Posterior vena cava (tissue), 2 donors: ENCODE measurements at regions of chr6 and their contacts with region 1.

Region 1: GRCh38 chr6:162179196-162179951 is 548.2 kb downstream of the PRKN start:
- DNase-seq: no peak

Region 2: DNA sequence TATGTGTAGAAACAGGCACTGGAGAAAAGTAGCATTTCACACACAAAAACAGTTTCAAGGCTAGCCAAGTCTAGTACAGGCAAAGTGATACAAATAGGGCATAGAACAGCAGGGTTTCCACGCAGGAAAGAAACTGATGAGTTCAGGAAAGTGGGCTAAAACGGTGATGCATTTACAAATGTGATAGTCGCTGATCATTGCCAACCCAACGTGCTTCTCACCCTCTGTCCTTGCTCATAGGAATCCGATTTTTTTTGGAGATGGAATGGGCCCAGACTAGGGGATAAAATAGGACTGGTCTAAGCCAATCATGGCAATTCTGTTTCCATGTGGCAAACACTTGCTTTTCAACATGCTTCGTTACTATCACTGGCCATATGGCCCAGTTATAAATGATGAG is 11.6 kb after region 1 on chr6:
- intact Hi-C with region 1: loop called in 1 of 2 experiments (anchors 1 kb)
- DNase-seq: no peak

Region 3: DNA sequence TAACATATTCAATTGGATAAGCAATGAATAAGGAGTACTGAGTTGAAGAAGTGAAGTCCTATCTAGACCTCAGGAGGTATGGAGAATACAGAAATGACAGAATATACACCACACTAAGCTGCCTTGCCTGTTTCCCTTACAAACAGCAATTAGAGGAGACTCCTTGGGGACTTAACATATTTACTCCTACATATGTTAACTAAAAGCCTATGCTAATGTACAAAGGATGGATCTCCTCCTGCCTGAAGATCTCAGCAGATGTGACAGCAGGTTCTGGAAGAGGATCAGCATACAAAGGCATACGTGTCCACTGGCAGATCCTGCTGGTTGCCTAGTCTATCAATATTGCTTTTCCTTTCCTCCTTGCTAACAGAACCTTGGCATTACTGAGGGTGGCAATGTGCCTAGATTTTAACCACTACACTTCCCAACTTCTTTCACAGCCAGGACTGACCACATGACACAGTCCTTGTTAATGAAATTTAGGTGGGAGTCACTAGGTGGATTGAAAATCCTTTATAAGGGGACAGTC is 518.6 kb after region 1 on chr6:
- intact Hi-C with region 1: no loop called
- DNase-seq: no peak

Region 4: DNA sequence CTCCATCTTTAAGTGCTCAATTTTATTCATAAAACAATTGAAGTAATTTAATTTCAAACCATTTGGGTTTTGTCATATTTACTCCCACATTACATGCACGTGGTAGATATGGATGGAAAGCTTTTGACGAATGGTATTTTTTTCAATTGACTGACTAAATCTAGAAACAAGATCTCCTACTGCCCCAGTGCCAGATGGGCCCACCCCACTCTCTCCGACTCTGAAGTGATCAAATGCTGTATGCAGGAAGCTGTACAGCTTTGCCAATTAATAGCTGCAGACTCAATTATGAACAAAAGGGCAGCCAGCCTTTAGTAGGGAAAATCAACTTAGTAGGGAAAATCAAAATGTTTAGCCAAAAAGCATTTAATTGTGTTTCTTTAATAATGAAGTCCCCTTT is 594.6 kb after region 1 on chr6:
- intact Hi-C with region 1: no loop called
- DNase-seq: no peak